ENCODE measurements at regions of chr11 and their contacts with region 1.

Region 1: DNA sequence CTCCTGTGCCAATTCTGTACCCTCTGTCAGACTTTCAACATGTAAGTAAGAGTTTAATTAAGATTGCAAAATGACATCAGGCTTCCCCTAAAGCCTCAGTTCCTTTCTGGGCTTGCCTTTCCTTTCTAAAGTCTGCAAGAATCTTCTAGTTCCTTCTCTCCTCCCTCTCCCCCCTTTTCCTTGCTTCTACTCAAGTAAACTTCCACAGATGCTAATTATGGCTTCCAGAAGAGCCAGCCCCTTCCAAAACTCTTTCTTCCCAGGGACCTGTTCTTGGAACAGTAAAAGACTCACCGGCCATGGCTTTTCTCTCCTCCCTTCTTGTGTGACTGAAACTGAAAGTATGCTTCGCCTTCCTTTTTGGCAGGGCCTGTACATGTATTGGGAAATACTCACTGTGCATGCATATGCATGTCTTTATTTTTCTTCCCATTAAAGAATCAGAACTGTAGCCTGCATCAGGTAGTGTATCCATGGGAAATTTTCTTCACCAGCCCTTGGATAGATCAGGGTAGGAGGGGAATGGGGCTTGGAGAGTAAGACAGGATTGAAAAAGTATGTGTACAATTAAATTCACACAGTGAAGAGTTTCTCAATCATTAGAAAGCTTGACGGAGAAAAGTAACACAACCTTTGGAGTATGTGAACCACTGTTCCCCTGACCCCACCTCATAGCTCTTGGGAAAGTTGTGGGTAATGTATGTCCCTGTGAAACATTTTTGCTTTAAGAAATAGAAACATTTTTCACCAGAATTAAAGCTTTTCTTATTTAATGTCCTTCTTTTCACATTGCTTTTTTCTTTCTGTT is at the start of gene CASP1:
- DNase-seq: peak in 7 of 9 experiments; percentile 10 to 70 (median 35)
- ATAC-seq: peak; percentile 75
- H3K4me3 ChIP-seq: peak within 1 kb of the TSS; percentile 64 to 66
- H3K4me3 Mint-ChIP-seq: peak within 1 kb of the TSS; percentile 92
- H3K27ac ChIP-seq: peak within 1 kb of the TSS; percentile 59 to 84
- H3K27ac Mint-ChIP-seq: peak within 1 kb of the TSS; percentile 93
- H3K4me1 ChIP-seq: peaks cover 28% of the 10 kb centered on the region
- H3K4me1 Mint-ChIP-seq: peaks cover 52% of the 10 kb centered on the region
- H3K27me3 ChIP-seq: no peaks in the 10 kb centered on the region
- H3K27me3 Mint-ChIP-seq: no peaks in the 10 kb centered on the region
- CTCF ChIP-seq: no peak
- total RNA-seq, gene CASP1: 11.3 to 15.9 TPM

Region 2: DNA sequence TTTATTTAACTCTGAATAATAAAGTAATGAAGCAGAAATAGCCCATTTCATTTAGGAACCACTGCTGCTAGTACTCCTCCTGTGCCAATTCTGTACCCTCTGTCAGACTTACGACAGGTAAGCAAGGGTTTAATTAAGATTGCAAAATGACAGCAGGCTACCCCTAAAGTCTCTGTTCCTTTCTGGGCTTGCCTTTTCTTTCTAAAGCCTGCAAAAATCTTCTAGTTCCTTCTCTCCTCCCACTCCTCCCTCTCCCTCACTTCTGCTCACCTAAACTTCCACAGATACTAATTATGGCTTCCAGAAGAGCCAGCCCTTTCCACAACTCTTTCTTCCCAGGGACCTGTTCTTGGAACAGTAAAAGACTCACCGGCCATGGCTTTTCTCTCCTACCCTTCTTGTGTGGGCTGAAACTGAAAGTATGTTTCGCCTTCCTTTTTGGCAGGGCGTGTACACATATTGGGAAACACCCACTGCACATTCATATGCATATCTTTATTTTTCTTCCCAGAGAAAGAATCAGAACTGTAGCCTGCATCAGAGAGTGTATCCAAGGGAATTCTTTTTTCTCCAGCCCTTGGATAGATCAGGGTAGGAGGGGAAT is 10.0 kb after region 1 on chr11 and contains the start of gene CARD16:
- CTCF ChIA-PET with region 1: interaction called, 4 read pairs
- POLR2A ChIA-PET with region 1: interaction called, 4 read pairs
- intact Hi-C with region 1: loop called in 1 of 2 experiments (anchors 1 kb)
- DNase-seq: peak in 7 of 9 experiments; percentile 21 to 79 (median 42)
- ATAC-seq: peak; percentile 88
- H3K4me3 ChIP-seq: peak within 1 kb of the TSS; percentile 58 to 64
- H3K4me3 Mint-ChIP-seq: peak within 1 kb of the TSS; percentile 95
- H3K27ac ChIP-seq: peak within 1 kb of the TSS; percentile 72 to 77
- H3K27ac Mint-ChIP-seq: peak within 1 kb of the TSS; percentile 96
- H3K4me1 ChIP-seq: peaks cover 26% of the 10 kb centered on the region
- H3K4me1 Mint-ChIP-seq: peaks cover 51% of the 10 kb centered on the region
- H3K27me3 ChIP-seq: no peaks in the 10 kb centered on the region
- H3K27me3 Mint-ChIP-seq: no peaks in the 10 kb centered on the region
- CTCF ChIP-seq: no peak
- total RNA-seq, gene CARD16: 16.0 to 18.7 TPM

Measured in CD8-positive, alpha-beta T cell (primary cell).